ENCODE measurements at regions of chr9 and their contacts with region 1.

Region 1: GRCh38 chr9:105713260-105714019 is 19.1 kb downstream of the TMEM38B start:
- DNase-seq: no peak
- ATAC-seq: peak; percentile 38
- H3K4me3 ChIP-seq: no peak overlapping the region
- H3K27ac ChIP-seq: no peak overlapping the region
- H3K4me1 ChIP-seq: no peaks in the 10 kb centered on the region
- H3K27me3 ChIP-seq: no peaks in the 10 kb centered on the region
- CTCF ChIP-seq: no peak
- POLR2A ChIP-seq: no peak
- RAD21 ChIP-seq: no peak

Region 2: DNA sequence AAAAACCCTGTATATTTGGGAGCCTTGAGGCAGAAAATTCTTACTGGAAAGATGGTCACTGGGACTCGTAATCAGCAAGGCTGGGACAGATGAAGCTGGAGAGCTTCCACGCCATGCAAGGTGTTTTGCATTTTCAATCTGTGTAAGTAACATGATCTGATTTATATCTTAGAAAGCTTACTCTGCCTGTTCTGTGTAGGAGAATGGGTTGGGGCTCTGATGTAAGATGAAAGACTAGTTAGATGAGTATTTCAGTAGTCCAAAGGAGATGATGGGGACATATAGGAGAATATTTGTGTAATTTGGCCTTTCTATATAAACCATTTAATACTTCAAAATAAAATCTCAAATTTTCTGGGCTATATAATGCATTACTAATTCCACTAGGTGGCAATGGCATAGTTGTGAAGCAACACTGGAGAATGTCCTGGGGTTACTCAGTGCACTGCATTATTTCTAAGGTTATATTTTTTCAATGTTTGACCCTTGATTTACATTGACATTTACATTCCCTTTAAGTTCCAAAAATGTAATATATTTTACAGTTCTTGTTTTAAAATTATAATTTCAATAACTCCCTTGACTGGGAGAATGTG is 287.5 kb before region 1 on chr9:
- CTCF ChIA-PET with region 1: no interaction called
- POLR2A ChIA-PET with region 1: no interaction called
- RAD21 ChIA-PET with region 1: no interaction called
- intact Hi-C with region 1: loop called (anchors 5 kb)
- DNase-seq: no peak
- ATAC-seq: peak; percentile 85
- H3K4me3 ChIP-seq: no peak overlapping the region
- H3K27ac ChIP-seq: no peak overlapping the region
- H3K4me1 ChIP-seq: no peaks in the 10 kb centered on the region
- H3K27me3 ChIP-seq: no peaks in the 10 kb centered on the region
- CTCF ChIP-seq: peak; percentile 37 to 58 (median 51); a peak in 4 of 6 replicates
- POLR2A ChIP-seq: no peak
- RAD21 ChIP-seq: peak; percentile 71

Region 3: GRCh38 chr9:105608721-105609598 is 104.5 kb before region 1 on chr9:
- CTCF ChIA-PET with region 1: interaction called, 12 read pairs
- POLR2A ChIA-PET with region 1: no interaction called
- RAD21 ChIA-PET with region 1: interaction called in 1 of 2 experiments, 3 read pairs
- intact Hi-C with region 1: loop called (anchors 1 kb)
- DNase-seq: peak; percentile 48
- ATAC-seq: peak; percentile 82
- H3K4me3 ChIP-seq: no peak overlapping the region
- H3K27ac ChIP-seq: no peak overlapping the region
- H3K4me1 ChIP-seq: no peaks in the 10 kb centered on the region
- H3K27me3 ChIP-seq: no peaks in the 10 kb centered on the region
- CTCF ChIP-seq: peak; percentile 43 to 60 (median 45); a peak in 4 of 6 replicates
- POLR2A ChIP-seq: no peak
- RAD21 ChIP-seq: peak; percentile 59